Naive thymus-derived CD4-positive, alpha-beta T cell (primary cell): ENCODE measurements at regions of chr7 and their contacts with region 1.

Region 1: DNA sequence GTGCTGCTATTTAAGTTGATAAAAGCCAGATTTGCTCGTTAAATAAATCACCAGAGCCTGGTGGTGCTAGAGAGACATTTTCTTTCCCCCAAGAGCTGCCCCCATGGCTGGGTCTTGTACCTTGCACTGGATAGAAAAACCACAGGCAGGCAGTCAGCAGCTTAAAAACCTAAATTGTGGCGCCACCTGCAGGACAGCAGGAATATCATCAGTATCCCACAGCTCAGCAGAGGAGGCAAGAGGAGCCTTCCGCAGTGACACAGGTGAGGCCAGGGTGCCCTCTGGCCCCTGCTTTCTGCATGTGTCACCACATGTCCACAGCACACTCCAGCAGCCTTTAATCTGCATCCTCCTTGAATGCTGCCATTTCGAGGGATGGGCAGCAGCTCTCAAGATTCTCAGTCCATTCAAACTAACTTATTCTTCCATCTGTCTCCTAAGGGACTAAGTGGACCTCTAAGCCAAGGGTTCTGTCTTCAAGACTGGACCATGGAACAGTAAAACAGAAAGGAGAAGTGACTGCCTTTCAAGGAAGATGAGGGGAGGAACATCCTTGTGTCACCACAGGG is 4.5 kb upstream of the PLXNA4 start:
- DNase-seq: peak; percentile 45 to 80 (median 64)
- ATAC-seq: peak; percentile 78
- H3K4me3 ChIP-seq: no peak overlapping the region
- H3K4me3 Mint-ChIP-seq: no peak overlapping the region
- H3K27ac ChIP-seq: no peak overlapping the region
- H3K27ac Mint-ChIP-seq: peak overlapping the region in 1 of 9 donors; percentile 26
- H3K4me1 ChIP-seq: no peaks in the 10 kb centered on the region
- H3K4me1 Mint-ChIP-seq: peaks cover 0 to 20% (median 8%) of the 10 kb centered on the region in 7 donors
- H3K27me3 ChIP-seq: peaks cover 1 to 5% of the 10 kb centered on the region in 2 donors
- H3K27me3 Mint-ChIP-seq: peaks cover 23 to 63% (median 32%) of the 10 kb centered on the region in 5 donors

Region 2: GRCh38 chr7:131859147-131859821 is 721.5 kb before region 1 on chr7:
- CTCF ChIA-PET with region 1: no interaction called
- POLR2A ChIA-PET with region 1: no interaction called
- intact Hi-C with region 1: loop called in 1 of 2 experiments (anchors 1 kb)
- DNase-seq: peak in 6 of 9 donors; percentile 1 to 35 (median 6)
- ATAC-seq: peak; percentile 67
- H3K4me3 ChIP-seq: no peak overlapping the region
- H3K4me3 Mint-ChIP-seq: no peak overlapping the region
- H3K27ac ChIP-seq: no peak overlapping the region
- H3K27ac Mint-ChIP-seq: no peak overlapping the region
- H3K4me1 ChIP-seq: no peaks in the 10 kb centered on the region
- H3K4me1 Mint-ChIP-seq: no peaks in the 10 kb centered on the region
- H3K27me3 ChIP-seq: no peaks in the 10 kb centered on the region
- H3K27me3 Mint-ChIP-seq: peaks cover 0 to 26% (median 10%) of the 10 kb centered on the region in 5 donors

Region 3: GRCh38 chr7:132394283-132395198 is 186.3 kb before region 1 on chr7:
- CTCF ChIA-PET with region 1: interaction called, 136 read pairs
- POLR2A ChIA-PET with region 1: no interaction called
- intact Hi-C with region 1: loop called in 1 of 2 experiments (anchors 1 kb)
- DNase-seq: peak in 7 of 9 donors; percentile 34 to 62 (median 40)
- ATAC-seq: peak; percentile 61
- H3K4me3 ChIP-seq: no peak overlapping the region
- H3K4me3 Mint-ChIP-seq: peak overlapping the region in 1 of 10 donors; percentile 36
- H3K27ac ChIP-seq: no peak overlapping the region
- H3K27ac Mint-ChIP-seq: peak overlapping the region in 2 of 9 donors; percentile 7 to 53
- H3K4me1 ChIP-seq: no peaks in the 10 kb centered on the region
- H3K4me1 Mint-ChIP-seq: peaks cover 0 to 30% (median 6%) of the 10 kb centered on the region in 7 donors
- H3K27me3 ChIP-seq: no peaks in the 10 kb centered on the region
- H3K27me3 Mint-ChIP-seq: peaks cover 0 to 27% (median 4%) of the 10 kb centered on the region in 5 donors

Region 4: DNA sequence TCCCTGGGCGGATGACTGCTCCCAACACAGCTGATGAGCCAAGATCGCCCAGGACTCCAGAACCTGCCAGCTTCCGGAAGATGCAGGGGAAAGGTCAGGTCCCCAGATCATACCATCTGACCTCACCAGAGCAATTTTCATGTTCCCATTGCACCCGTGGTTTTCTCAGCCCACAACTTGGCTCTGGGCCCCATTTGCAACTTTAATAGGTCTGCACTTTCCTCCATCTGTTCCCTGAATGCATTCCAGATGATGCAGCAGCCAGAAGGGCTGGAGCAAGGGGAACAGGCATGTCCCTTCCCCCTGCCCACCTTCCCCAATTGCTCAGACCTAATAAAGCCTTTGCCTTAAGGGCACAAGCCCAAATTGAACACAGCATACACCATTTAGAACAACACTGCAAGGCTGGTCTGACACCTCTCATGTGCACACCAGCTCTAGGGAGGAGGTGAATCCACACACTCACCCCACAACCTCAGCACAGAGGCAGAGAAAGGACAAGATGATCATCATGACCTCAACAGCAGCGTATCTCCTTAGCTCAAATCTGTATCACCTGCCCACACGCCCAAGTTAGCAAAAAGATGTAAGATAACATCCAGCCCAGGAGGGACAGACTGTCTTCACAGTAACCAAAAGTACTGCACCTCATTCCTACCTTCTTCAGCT is 92.0 kb before region 1 on chr7:
- CTCF ChIA-PET with region 1: interaction called, 5 read pairs
- POLR2A ChIA-PET with region 1: no interaction called
- intact Hi-C with region 1: loop called in 1 of 2 experiments (anchors 5 kb)
- DNase-seq: no peak
- ATAC-seq: no peak
- H3K4me3 ChIP-seq: no peak overlapping the region
- H3K4me3 Mint-ChIP-seq: no peak overlapping the region
- H3K27ac ChIP-seq: no peak overlapping the region
- H3K27ac Mint-ChIP-seq: peak overlapping the region in 1 of 9 donors; percentile 3
- H3K4me1 ChIP-seq: peaks cover 22 to 31% of the 10 kb centered on the region in 2 donors
- H3K4me1 Mint-ChIP-seq: peaks cover 29 to 56% (median 45%) of the 10 kb centered on the region in 7 donors
- H3K27me3 ChIP-seq: no peaks in the 10 kb centered on the region
- H3K27me3 Mint-ChIP-seq: peaks cover 0 to 42% (median 0%) of the 10 kb centered on the region in 5 donors

Region 5: DNA sequence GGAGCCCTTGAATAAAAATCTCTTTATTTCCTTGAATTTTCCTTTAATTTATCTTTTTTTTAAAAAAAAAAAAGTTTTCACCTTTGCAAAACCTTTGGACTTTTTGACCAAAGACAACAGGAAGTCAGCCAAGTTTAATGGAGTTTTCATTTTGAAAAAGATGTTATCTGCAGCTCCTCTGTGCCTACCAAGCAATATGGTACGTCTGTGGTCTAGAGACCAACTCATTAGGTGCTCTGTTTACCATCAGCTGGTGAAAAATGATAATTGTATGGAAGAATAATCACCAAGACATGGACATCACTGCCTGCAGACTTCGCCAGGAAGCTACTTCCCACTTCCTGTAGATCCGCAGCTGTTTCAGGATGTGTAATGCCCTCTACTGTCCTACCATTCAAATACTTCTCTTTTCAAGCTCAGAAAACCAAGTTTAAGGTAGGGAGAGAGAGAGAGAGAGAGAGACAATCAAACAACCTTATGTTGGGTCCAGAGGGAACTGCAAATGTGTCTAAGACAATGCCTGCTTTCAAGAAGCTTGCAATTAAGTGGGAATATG is 23.2 kb before region 1 on chr7:
- CTCF ChIA-PET with region 1: interaction called, 11 read pairs
- POLR2A ChIA-PET with region 1: no interaction called
- intact Hi-C with region 1: no loop called
- DNase-seq: no peak
- ATAC-seq: no peak
- H3K4me3 ChIP-seq: no peak overlapping the region
- H3K4me3 Mint-ChIP-seq: peak overlapping the region in 3 of 10 donors; percentile 8 to 48 (median 20)
- H3K27ac ChIP-seq: no peak overlapping the region
- H3K27ac Mint-ChIP-seq: peak overlapping the region in 1 of 9 donors; percentile 29
- H3K4me1 ChIP-seq: no peaks in the 10 kb centered on the region
- H3K4me1 Mint-ChIP-seq: peaks cover 0 to 33% (median 5%) of the 10 kb centered on the region in 7 donors
- H3K27me3 ChIP-seq: no peaks in the 10 kb centered on the region
- H3K27me3 Mint-ChIP-seq: peaks cover 0 to 52% (median 4%) of the 10 kb centered on the region in 5 donors

Region 6: GRCh38 chr7:133434055-133434865 is 853.5 kb after region 1 on chr7:
- CTCF ChIA-PET with region 1: no interaction called
- POLR2A ChIA-PET with region 1: no interaction called
- intact Hi-C with region 1: loop called in 1 of 2 experiments (anchors 10 kb)
- DNase-seq: peak in 5 of 9 donors; percentile 5 to 36 (median 31)
- ATAC-seq: peak; percentile 54
- H3K4me3 ChIP-seq: no peak overlapping the region
- H3K4me3 Mint-ChIP-seq: no peak overlapping the region
- H3K27ac ChIP-seq: no peak overlapping the region
- H3K27ac Mint-ChIP-seq: peak overlapping the region in 1 of 9 donors; percentile 17
- H3K4me1 ChIP-seq: no peaks in the 10 kb centered on the region
- H3K4me1 Mint-ChIP-seq: peaks cover 0 to 18% (median 13%) of the 10 kb centered on the region in 7 donors
- H3K27me3 ChIP-seq: no peaks in the 10 kb centered on the region
- H3K27me3 Mint-ChIP-seq: no peaks in the 10 kb centered on the region